Common myeloid progenitor, CD34-positive (primary cell): ENCODE measurements at regions of chr1 and their contacts with region 1.

Region 1: DNA sequence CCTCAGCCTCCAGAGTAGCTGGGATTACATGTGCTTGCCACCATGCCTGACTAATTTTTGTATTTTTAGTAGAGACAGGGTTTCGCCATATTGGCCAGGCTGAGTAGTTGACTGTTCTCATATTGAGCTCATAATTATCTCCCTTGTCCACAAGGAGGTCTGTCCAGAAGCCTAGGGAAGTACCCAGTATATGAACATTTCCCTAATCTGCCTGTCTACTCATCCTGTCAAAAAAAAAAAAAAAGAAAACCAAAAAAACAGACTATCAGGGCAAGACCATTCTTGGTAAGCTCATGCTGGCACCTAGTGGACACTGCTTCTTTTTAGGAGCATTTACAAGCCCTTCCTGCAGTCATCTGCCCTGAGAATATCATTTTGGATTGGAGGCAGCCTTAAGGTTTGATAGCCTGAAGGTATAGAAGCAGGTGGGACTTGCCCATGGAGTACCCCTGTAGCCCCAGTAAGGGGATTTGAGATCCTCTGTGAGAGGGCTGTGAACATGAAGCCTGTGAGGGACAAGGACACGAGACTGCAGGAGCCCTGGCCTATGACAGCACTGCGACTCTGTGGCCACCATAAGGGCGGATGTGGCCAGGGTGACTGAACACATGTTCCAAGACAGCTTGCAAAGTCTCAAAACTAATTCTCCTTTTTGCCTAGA is 10.8 kb upstream of the DUSP12 start:
- DNase-seq: peak; percentile 79 to 85 (median 82)
- H3K4me3 ChIP-seq: no peak overlapping the region
- H3K27ac ChIP-seq: no peak overlapping the region
- H3K4me1 ChIP-seq: peaks cover 11 to 30% (median 16%) of the 10 kb centered on the region in 4 experiments
- H3K27me3 ChIP-seq: no peaks in the 10 kb centered on the region

Region 2: GRCh38 chr1:161486806-161487741 is 251.7 kb before region 1 on chr1:
- CTCF ChIA-PET with region 1: interaction called, 54 read pairs
- POLR2A ChIA-PET with region 1: no interaction called
- DNase-seq: peak; percentile 72 to 86 (median 79)
- H3K4me3 ChIP-seq: no peak overlapping the region
- H3K27ac ChIP-seq: peak overlapping the region in 1 of 2 experiments; percentile 7
- H3K4me1 ChIP-seq: peaks cover 7 to 16% (median 12%) of the 10 kb centered on the region in 4 experiments
- H3K27me3 ChIP-seq: peaks cover 0 to 59% (median 12%) of the 10 kb centered on the region in 5 experiments

Region 3: GRCh38 chr1:161678500-161678899 is 60.3 kb before region 1 on chr1:
- CTCF ChIA-PET with region 1: interaction called, 10 read pairs
- POLR2A ChIA-PET with region 1: no interaction called
- DNase-seq: no peak
- H3K4me3 ChIP-seq: no peak overlapping the region
- H3K27ac ChIP-seq: no peak overlapping the region
- H3K4me1 ChIP-seq: no peaks in the 10 kb centered on the region
- H3K27me3 ChIP-seq: peaks cover 0 to 4% (median 0%) of the 10 kb centered on the region in 5 experiments

Region 4: GRCh38 chr1:161726596-161727457 is 11.9 kb before region 1 on chr1:
- CTCF ChIA-PET with region 1: interaction called, 74 read pairs
- POLR2A ChIA-PET with region 1: no interaction called
- DNase-seq: peak; percentile 44 to 78 (median 64)
- H3K4me3 ChIP-seq: peak overlapping the region; percentile 40 to 89 (median 73)
- H3K27ac ChIP-seq: peak overlapping the region in 1 of 2 experiments; percentile 77
- H3K4me1 ChIP-seq: peaks cover 4 to 54% (median 23%) of the 10 kb centered on the region in 4 experiments
- H3K27me3 ChIP-seq: peaks cover 0 to 44% (median 15%) of the 10 kb centered on the region in 5 experiments

Region 5: DNA sequence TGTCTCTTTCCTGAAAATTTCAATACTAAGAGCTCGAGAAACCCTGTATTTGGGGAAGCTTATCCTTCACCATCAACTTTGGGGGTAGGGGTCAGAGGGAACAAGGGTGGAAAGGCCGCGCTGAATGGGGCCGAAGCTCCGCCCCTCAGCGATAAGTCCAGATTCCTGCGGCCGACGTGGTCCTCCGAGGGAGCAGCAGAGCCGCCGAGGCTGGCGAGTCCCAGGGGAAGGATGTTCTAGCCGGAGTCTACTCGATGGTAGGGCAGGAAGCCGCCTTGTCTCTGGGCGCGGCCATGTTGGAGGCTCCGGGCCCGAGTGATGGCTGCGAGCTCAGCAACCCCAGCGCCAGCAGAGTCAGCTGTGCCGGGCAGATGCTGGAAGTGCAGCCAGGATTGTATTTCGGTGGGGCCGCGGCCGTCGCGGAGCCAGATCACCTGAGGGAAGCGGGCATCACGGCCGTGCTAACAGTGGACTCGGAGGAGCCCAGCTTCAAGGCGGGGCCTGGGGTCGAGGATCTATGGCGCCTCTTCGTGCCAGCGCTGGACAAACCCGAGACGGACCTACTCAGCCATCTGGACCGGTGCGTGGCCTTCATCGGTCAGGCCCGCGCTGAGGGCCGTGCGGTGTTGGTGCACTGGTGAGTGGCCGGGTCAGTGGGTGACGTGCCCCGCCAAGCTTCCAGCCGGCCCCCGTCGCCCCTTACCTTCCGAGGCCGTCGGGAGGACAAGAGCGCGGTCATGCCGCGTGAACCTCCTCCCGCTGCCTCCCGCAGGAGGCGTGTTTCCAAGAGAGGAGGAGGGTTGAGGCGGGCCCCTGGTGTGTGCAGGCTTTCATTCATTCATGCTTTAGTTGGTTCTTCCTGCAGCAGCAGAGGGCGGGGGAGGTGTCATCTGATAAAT is 11.0 kb after region 1 on chr1 and contains the start of gene DUSP12:
- CTCF ChIA-PET with region 1: interaction called, 37 read pairs
- POLR2A ChIA-PET with region 1: no interaction called
- DNase-seq: peak; percentile 93 to 95 (median 95)
- H3K4me3 ChIP-seq: peak within 1 kb of the TSS; percentile 84 to 100 (median 98)
- H3K27ac ChIP-seq: peak within 1 kb of the TSS; percentile 40 to 85
- H3K4me1 ChIP-seq: peaks cover 3 to 17% (median 12%) of the 10 kb centered on the region in 4 experiments
- H3K27me3 ChIP-seq: no peaks in the 10 kb centered on the region